ENCODE measurements at regions of chr3 and their contacts with region 1.

Region 1: DNA sequence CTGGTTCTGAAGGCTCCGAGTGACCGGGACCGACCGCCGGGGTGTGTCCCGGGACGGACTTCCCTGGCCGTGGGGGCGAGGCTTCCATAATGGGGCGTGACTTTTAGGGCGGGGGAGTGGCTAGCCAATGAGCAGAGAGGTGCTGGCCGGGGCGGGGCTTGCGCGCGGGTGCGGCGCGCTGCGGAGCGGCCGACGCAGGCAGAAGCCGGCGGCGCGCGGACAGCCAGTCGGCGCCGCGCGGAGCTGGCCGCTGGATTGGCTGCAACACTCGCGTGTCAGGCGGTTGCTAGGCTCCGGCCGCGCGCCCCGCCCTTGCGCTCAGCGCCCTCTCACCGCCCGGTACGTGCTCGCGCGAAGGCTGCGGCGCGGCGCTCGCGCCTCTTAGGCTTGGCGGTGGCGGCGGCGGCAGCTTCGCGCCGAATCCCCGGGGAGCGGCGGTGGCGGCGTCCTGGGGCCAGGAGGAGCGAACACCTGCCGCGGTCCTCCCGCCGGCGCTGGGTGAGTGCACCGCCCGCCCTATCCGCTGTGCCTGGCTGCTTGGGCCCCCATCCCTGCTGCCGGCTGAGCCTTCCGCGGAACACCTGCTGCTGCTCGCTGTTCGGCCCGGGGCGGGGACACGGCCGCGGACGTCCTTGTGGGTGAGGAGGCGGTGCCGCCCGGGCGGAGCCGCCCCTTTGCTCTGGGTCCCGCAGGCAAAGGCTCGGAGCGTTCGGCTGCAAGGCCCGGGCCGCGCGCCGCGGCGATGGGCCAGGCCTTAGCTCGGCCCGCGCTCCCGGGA is at the start of gene DAG1:
- DNase-seq: peak; percentile 89 to 94
- ATAC-seq: peak; percentile 90
- H3K4me3 ChIP-seq: peak within 1 kb of the TSS; percentile 89
- H3K27ac ChIP-seq: peak within 1 kb of the TSS; percentile 94 to 99
- H3K4me1 ChIP-seq: peaks cover 31% of the 10 kb centered on the region
- CTCF ChIP-seq: no peak
- EP300 ChIP-seq: no peak
- POLR2A ChIP-seq: peak; percentile 52; the same call in 1 of the 2 replicates
- RAD21 ChIP-seq: no peak
- polyA plus RNA-seq, gene DAG1: 46.6 and 70.8 TPM in 2 replicates

Region 2: GRCh38 chr3:49112262-49112661 is 357.9 kb before region 1 on chr3:
- CTCF ChIA-PET with region 1: no interaction called
- POLR2A ChIA-PET with region 1: no interaction called
- DNase-seq: no peak
- ATAC-seq: no peak; a peak in 1 of 6 replicates
- H3K4me3 ChIP-seq: no peak overlapping the region
- H3K27ac ChIP-seq: no peak overlapping the region
- H3K4me1 ChIP-seq: no peaks in the 10 kb centered on the region
- CTCF ChIP-seq: no peak
- EP300 ChIP-seq: no peak
- POLR2A ChIP-seq: no peak
- RAD21 ChIP-seq: no peak

Region 3: GRCh38 chr3:49500732-49501609 is 30.8 kb after region 1 on chr3:
- CTCF ChIA-PET with region 1: no interaction called
- POLR2A ChIA-PET with region 1: interaction called, 23 read pairs
- DNase-seq: peak; percentile 67 to 92
- ATAC-seq: peak; percentile 91 to 97
- H3K4me3 ChIP-seq: no peak overlapping the region
- H3K27ac ChIP-seq: peak overlapping the region; percentile 83 to 91
- H3K4me1 ChIP-seq: peaks cover 59% of the 10 kb centered on the region
- CTCF ChIP-seq: no peak
- EP300 ChIP-seq: no peak
- POLR2A ChIP-seq: no peak
- RAD21 ChIP-seq: no peak

Region 4: GRCh38 chr3:49733551-49733950 is 263.4 kb after region 1 on chr3:
- CTCF ChIA-PET with region 1: no interaction called
- POLR2A ChIA-PET with region 1: no interaction called
- DNase-seq: no peak
- ATAC-seq: no peak
- H3K4me3 ChIP-seq: no peak overlapping the region
- H3K27ac ChIP-seq: no peak overlapping the region
- H3K4me1 ChIP-seq: no peaks in the 10 kb centered on the region
- CTCF ChIP-seq: no peak
- EP300 ChIP-seq: no peak
- POLR2A ChIP-seq: no peak
- RAD21 ChIP-seq: no peak